Gastrocnemius medialis (tissue), 4 donors: ENCODE measurements at regions of chr3 and their contacts with region 1.

Region 1: DNA sequence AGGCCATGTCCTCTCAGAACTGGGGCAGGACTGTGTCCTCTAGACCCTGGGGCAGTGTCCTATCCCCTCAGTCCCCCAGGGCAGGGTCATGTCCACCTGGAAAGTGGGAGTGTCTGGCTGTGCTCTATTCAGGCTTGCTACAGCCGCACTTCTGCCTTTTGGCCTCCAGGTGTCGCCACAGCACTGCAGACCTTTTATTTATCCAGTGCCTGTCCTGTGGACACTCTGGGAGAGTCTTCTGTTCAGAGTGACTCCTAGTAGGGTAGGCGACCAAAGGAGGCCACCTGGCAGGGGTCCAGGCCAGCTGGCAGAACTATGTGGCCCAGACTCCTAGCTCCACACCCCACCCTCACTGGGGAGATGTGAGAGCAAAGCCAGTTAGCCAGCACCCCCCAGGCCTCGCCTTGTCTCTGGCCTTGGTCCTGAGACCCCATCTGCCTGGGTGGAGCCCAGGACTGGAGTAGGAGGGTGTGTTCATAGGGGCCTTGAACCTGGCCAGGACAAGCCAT is 3.9 kb downstream of the TMIE start:
- DNase-seq: peak; percentile 52 to 70
- ATAC-seq: peak; percentile 85 to 89
- H3K4me3 ChIP-seq: no peak overlapping the region
- H3K27ac ChIP-seq: no peak overlapping the region
- H3K4me1 ChIP-seq: peaks cover 15 to 34% of the 10 kb centered on the region in 2 donors
- H3K27me3 ChIP-seq: no peaks in the 10 kb centered on the region
- CTCF ChIP-seq: peak; percentile 94 to 99 (median 98)
- POLR2A ChIP-seq: no peak

Region 2: GRCh38 chr3:46866720-46867549 is 161.9 kb after region 1 on chr3:
- in situ Hi-C with region 1: no loop called
- intact Hi-C with region 1: loop called (anchors 1 kb)
- DNase-seq: peak; percentile 41 to 68
- ATAC-seq: peak; percentile 40 to 56
- H3K4me3 ChIP-seq: peak overlapping the region in 2 of 4 donors; percentile 7 to 19
- H3K27ac ChIP-seq: peak overlapping the region; percentile 68 to 89 (median 72)
- H3K4me1 ChIP-seq: peaks cover 34 to 36% of the 10 kb centered on the region in 2 donors
- H3K27me3 ChIP-seq: no peaks in the 10 kb centered on the region
- CTCF ChIP-seq: peak; percentile 86 to 95 (median 91)
- POLR2A ChIP-seq: no peak

Region 3: DNA sequence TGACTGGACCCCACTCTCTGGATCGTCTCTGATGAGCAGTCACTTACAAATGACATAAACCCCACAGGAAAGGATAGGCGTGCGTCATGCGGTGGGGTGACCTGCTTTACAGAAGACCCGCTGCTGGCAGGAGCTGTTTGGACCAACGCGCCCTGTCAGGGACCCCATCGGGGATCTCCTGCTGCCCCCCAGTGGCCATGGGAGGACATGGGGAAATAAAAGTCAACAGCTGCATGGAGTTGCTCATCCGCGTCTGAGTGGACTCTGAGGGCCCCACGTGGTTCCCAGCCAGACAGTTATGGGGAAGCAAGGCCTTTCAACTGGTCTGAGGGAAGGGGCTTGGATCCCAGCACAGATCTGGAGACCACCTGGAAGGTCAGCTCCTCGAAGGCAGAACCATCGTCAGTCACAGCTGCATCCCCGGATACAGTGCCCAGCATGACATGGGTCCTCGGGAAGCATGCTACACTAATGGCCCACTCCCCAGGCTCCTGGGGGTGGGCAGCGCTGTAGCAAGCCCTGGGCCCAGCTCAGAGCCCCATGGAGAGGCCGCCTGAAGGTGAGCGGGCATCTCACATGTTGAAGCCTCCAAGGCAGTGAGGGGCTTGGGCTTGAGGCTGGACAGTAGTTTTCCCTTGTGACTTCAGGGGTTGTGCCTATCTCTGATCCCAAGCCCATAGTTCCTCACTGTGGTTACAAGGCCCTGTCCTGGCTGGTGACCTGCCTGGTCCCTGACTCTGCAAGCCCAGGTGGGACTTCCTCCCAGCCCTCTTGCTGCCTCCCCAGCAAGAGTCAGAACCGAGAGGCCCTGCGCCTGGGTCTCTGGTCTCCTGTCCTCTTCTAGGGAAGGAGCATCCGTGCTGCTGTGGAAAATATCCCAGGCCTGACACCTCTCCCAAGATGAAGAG is 204.7 kb after region 1 on chr3:
- in situ Hi-C with region 1: loop called in 3 of 4 experiments (anchors 5 to 10 kb)
- intact Hi-C with region 1: loop called (anchors 1 kb)
- DNase-seq: peak; percentile 65 to 82
- ATAC-seq: peak; percentile 73 to 89
- H3K4me3 ChIP-seq: no peak overlapping the region
- H3K27ac ChIP-seq: no peak overlapping the region
- H3K4me1 ChIP-seq: peaks cover 15 to 20% of the 10 kb centered on the region in 2 donors
- H3K27me3 ChIP-seq: no peaks in the 10 kb centered on the region
- CTCF ChIP-seq: peak; percentile 83 to 94 (median 87)
- POLR2A ChIP-seq: no peak

Region 4: GRCh38 chr3:47324278-47324865 is 619.3 kb after region 1 on chr3:
- in situ Hi-C with region 1: loop called (anchors 25 kb)
- intact Hi-C with region 1: loop called (anchors 5 kb)
- DNase-seq: peak; percentile 16 to 42
- ATAC-seq: peak; percentile 94 to 99
- H3K4me3 ChIP-seq: no peak overlapping the region
- H3K27ac ChIP-seq: no peak overlapping the region
- H3K4me1 ChIP-seq: no peaks in the 10 kb centered on the region
- H3K27me3 ChIP-seq: no peaks in the 10 kb centered on the region
- CTCF ChIP-seq: peak; percentile 36 to 77 (median 64)
- POLR2A ChIP-seq: no peak